HEK293 (cell line): ENCODE measurements at regions of chr1 and their contacts with region 1.

Region 1: GRCh38 chr1:163933437-163933836 is 611.7 kb downstream of the NUF2 start:
- H3K4me3 ChIP-seq: no peak overlapping the region
- H3K27ac ChIP-seq: no peak overlapping the region
- H3K4me1 ChIP-seq: no peaks in the 10 kb centered on the region
- CTCF ChIP-seq: no peak

Region 2: DNA sequence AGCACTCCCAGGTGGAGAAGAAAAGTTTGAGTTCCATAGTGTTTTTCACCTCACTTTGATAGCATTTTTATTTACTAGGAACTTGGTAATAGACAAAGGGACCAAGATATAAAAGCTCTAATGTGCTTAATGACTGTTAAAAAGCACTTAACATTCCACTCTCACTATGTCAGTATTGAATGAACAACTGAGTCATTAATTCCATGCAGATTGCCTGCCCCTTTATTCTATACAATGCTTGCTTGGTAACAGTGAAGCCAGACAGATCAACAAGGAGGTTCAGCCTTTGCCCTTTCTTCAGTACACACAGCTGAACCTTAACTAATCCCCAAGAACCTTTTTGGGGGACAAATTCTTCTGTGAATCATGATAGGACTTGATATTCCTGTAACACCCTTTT is 186.2 kb before region 1 on chr1:
- CTCF ChIA-PET with region 1: interaction called, 10 read pairs
- POLR2A ChIA-PET with region 1: no interaction called
- H3K4me3 ChIP-seq: no peak overlapping the region
- H3K27ac ChIP-seq: no peak overlapping the region
- H3K4me1 ChIP-seq: no peaks in the 10 kb centered on the region
- CTCF ChIP-seq: no peak